Mammary epithelial cell (primary cell): ENCODE measurements at regions of chr5 and their contacts with region 1.

Region 1: GRCh38 chr5:13478831-13479465 is 465.5 kb downstream of the DNAH5 start:
- DNase-seq: peak; percentile 65
- H3K4me3 ChIP-seq: no peak overlapping the region
- H3K27ac ChIP-seq: no peak overlapping the region
- H3K4me1 ChIP-seq: peaks cover 23% of the 10 kb centered on the region
- H3K27me3 ChIP-seq: no peaks in the 10 kb centered on the region
- CTCF ChIP-seq: peak; percentile 72 to 76

Region 2: DNA sequence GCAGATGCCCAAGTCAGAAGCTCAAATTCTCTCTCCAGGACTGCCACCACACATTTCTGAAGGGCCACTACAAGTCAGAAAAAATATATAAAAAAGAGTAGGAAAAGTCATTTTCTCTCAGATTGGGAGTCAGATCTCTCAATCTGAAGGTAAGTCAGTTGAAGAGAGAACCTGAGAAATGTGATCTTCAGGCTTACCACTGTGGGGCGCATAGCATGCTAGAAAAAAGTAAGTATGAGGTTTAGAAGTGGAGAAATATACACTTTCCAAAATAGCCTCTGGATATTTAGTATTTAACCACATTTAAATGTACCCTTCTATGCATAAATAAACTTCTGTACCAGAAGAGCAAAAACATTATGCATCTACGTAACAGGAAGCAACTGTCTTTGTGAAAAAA is 774.0 kb before region 1 on chr5:
- CTCF ChIA-PET with region 1: no interaction called
- dilution Hi-C with region 1: no loop called
- in situ Hi-C with region 1: no loop called
- intact Hi-C with region 1: loop called (anchors 1 kb)
- DNase-seq: peak; percentile 1
- H3K4me3 ChIP-seq: no peak overlapping the region
- H3K27ac ChIP-seq: no peak overlapping the region
- H3K4me1 ChIP-seq: no peaks in the 10 kb centered on the region
- H3K27me3 ChIP-seq: peaks cover 3% of the 10 kb centered on the region
- CTCF ChIP-seq: peak; percentile 33 to 63

Region 3: GRCh38 chr5:13218518-13218917 is 260.4 kb before region 1 on chr5:
- CTCF ChIA-PET with region 1: no interaction called
- dilution Hi-C with region 1: no loop called
- in situ Hi-C with region 1: no loop called
- intact Hi-C with region 1: loop called (anchors 1 kb)
- DNase-seq: peak; percentile 29
- H3K4me3 ChIP-seq: no peak overlapping the region
- H3K27ac ChIP-seq: no peak overlapping the region
- H3K4me1 ChIP-seq: no peaks in the 10 kb centered on the region
- H3K27me3 ChIP-seq: no peaks in the 10 kb centered on the region
- CTCF ChIP-seq: peak; percentile 35 to 64

Region 4: GRCh38 chr5:13653709-13654108 is 174.8 kb after region 1 on chr5:
- CTCF ChIA-PET with region 1: interaction called, 13 read pairs
- dilution Hi-C with region 1: no loop called
- in situ Hi-C with region 1: no loop called
- intact Hi-C with region 1: loop called (anchors 2 kb)
- DNase-seq: peak; percentile 64
- H3K4me3 ChIP-seq: no peak overlapping the region
- H3K27ac ChIP-seq: no peak overlapping the region
- H3K4me1 ChIP-seq: peaks cover 21% of the 10 kb centered on the region
- H3K27me3 ChIP-seq: no peaks in the 10 kb centered on the region
- CTCF ChIP-seq: no peak

Region 5: GRCh38 chr5:13831351-13831750 is 352.4 kb after region 1 on chr5:
- CTCF ChIA-PET with region 1: interaction called, 5 read pairs
- dilution Hi-C with region 1: no loop called
- in situ Hi-C with region 1: no loop called
- intact Hi-C with region 1: loop called (anchors 10 kb)
- DNase-seq: peak; percentile 74
- H3K4me3 ChIP-seq: no peak overlapping the region
- H3K27ac ChIP-seq: peak overlapping the region; percentile 64
- H3K4me1 ChIP-seq: peaks cover 23% of the 10 kb centered on the region
- H3K27me3 ChIP-seq: no peaks in the 10 kb centered on the region
- CTCF ChIP-seq: peak; percentile 20 to 49

Region 6: GRCh38 chr5:13957032-13957645 is 478.2 kb after region 1 on chr5:
- CTCF ChIA-PET with region 1: interaction called, 3 read pairs
- dilution Hi-C with region 1: no loop called
- in situ Hi-C with region 1: no loop called
- intact Hi-C with region 1: loop called (anchors 1 kb)
- DNase-seq: peak; percentile 59
- H3K4me3 ChIP-seq: no peak overlapping the region
- H3K27ac ChIP-seq: no peak overlapping the region
- H3K4me1 ChIP-seq: no peaks in the 10 kb centered on the region
- H3K27me3 ChIP-seq: no peaks in the 10 kb centered on the region
- CTCF ChIP-seq: peak; percentile 77 to 80